A673 (cell line): ENCODE measurements at regions of chr4 and their contacts with region 1.

Region 1: DNA sequence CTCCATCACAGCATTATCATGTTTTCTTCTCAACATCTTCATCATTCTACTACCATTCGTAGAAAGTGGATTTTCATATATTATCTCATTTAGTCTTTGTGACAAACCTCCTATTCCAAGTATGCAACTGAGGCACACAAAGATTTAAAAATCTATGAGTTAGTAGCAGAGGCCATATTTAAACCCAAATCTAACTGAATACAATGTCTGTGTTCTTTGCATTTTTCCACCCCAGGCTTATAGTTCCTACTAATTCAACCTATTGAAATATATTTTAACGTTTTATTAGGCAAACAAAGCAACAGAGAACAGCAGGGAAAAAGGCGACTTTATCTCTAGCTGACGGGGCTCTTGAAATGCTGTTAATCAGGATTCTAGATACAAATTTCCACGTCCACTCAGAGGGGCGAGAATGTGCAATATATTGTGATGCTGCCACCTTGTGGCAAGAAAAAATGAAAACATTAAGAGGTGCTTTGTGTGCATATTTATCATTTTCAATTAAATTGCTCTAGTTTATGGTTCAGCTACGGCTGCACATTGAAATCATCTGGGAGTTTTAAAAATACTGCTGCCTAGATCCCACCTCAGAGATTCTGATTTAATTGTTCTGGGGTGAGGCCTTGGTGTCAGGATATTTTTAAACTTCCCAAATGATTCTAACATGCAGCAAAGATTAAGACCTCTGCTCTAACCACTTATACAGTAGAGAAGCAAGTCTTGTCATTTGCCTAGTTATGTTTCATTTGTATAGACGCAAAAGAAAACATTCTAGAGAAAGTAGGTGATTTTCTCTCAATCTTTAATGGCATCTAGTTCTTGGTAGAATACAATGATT is 315.9 kb downstream of the MAPK10 start:
- DNase-seq: peak; percentile 60
- H3K4me3 ChIP-seq: no peak overlapping the region
- H3K27ac ChIP-seq: no peak overlapping the region
- H3K4me1 ChIP-seq: no peaks in the 10 kb centered on the region
- H3K27me3 ChIP-seq: no peaks in the 10 kb centered on the region
- CTCF ChIP-seq: peak; percentile 59

Region 2: GRCh38 chr4:85084380-85085094 is 959.4 kb before region 1 on chr4:
- CTCF ChIA-PET with region 1: no interaction called
- POLR2A ChIA-PET with region 1: no interaction called
- intact Hi-C with region 1: loop called (anchors 10 kb)
- DNase-seq: peak; percentile 54
- H3K4me3 ChIP-seq: no peak overlapping the region
- H3K27ac ChIP-seq: no peak overlapping the region
- H3K4me1 ChIP-seq: no peaks in the 10 kb centered on the region
- H3K27me3 ChIP-seq: no peaks in the 10 kb centered on the region
- CTCF ChIP-seq: peak; percentile 57

Region 3: DNA sequence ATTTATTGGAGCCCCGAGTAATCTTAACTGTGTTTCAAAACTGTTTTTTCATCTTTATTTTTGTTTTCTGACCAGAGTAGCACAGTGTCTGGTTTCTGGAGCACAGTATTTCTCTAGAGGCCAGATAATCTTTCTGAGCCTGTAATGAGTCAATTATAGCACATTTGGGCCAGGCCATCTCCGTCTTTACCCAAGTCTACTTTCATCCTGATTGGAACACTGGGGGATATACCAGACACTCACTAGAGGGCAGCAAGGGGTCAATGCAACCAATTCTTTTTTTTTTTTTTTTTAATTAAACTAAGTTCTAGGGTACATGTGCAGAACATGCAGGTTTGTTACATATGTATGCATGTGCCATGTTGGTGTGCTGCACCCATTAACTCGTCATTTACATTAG is 287.0 kb before region 1 on chr4:
- CTCF ChIA-PET with region 1: no interaction called
- POLR2A ChIA-PET with region 1: no interaction called
- intact Hi-C with region 1: loop called (anchors 10 kb)
- DNase-seq: peak; percentile 24
- H3K4me3 ChIP-seq: no peak overlapping the region
- H3K27ac ChIP-seq: no peak overlapping the region
- H3K4me1 ChIP-seq: no peaks in the 10 kb centered on the region
- H3K27me3 ChIP-seq: no peaks in the 10 kb centered on the region
- CTCF ChIP-seq: peak; percentile 28; the same call in 1 of the 2 replicates

Region 4: DNA sequence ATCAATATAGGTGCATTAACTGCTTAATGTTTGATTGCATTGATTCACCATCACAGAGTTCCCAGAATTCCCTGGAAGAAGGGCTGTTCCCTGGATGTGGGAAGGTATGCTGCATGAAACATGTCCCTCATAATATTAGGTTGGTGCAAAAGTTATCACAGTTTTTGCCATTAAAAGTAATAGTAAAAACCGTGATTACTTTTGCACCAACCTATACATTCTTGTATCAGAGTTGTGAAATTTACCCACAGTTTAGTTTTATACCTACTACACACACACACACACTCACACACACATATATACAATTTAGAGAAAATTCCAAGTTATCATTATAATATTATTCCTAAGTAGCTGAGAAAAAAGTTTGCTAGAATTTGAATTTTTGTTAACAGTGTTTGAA is 248.0 kb before region 1 on chr4:
- CTCF ChIA-PET with region 1: interaction called, 6 read pairs
- POLR2A ChIA-PET with region 1: no interaction called
- intact Hi-C with region 1: loop called (anchors 2 kb)
- DNase-seq: no peak
- H3K4me3 ChIP-seq: no peak overlapping the region
- H3K27ac ChIP-seq: no peak overlapping the region
- H3K4me1 ChIP-seq: no peaks in the 10 kb centered on the region
- H3K27me3 ChIP-seq: no peaks in the 10 kb centered on the region
- CTCF ChIP-seq: no peak

Region 5: DNA sequence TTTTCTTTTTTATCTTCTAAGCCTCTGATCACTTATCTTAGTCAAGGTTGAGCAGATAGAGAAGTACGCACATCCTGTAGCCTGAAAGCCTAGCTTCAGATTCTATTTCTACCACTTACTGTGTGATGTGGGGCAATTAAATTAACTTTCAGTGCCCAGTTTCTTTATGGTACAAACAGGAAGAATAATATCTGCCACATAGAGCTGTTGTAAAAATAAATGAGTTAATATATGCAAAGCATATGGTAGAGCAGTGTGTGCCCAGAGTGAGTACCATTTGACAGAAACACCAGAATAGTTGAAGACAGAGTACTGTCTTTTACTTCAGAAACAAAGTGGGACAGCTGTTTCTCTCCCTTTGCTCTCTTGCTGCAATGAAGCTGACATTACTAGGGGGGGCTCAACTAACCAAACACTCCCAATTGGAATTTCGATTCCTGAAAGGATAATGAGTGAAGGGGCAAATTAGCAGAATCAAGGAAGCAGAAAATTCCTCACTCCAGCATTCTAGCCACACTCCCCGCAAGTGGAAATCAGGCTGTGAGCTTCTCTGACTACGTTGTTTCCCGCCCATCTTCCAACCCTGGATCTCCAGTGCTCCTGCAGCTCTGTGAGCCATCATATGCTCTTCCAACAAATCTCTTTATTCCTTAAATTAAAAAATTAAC is 235.5 kb after region 1 on chr4:
- CTCF ChIA-PET with region 1: no interaction called
- POLR2A ChIA-PET with region 1: no interaction called
- intact Hi-C with region 1: no loop called
- DNase-seq: no peak
- H3K4me3 ChIP-seq: no peak overlapping the region
- H3K27ac ChIP-seq: no peak overlapping the region
- H3K4me1 ChIP-seq: no peaks in the 10 kb centered on the region
- H3K27me3 ChIP-seq: no peaks in the 10 kb centered on the region
- CTCF ChIP-seq: no peak